CD8-positive, alpha-beta memory T cell (primary cell): ENCODE measurements at regions of chr18 and their contacts with region 1.

Region 1: DNA sequence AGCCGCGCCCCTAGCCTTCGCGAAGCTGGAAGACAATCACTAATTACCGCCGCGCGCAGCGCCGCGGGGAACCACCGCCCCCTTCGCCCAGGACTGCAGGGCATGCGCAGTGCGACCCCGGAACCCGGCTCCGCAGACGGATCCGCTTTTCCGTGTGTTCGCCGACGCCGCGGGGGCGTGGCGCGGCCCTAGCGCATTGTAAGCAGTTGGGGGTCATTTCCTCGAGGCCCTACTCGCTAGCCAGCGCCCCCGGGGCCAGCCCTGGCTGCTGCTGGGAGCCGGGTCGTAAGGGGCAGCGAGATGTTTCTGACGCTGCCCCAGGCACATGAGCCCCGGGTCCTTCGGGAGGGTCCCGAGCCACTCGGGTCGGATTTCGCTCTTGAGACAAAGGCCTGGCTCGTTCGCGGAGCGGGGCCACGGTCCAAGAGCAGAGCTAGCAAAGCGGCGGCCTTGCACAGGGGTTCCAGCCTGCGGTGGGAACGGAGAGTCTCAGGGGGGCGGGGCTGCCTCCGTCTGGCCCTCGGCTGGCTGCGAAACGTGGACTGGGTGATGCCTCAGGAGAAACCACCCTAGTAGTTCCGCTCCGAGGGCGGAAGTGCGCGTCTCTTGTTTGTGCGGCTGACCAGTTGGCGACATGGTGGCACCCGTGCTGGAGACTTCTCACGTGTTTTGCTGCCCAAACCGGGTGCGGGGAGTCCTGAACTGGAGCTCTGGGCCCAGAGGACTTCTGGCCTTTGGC is at the starts of genes ELP2 and SLC39A6:
- DNase-seq: peak; percentile 93 to 96 (median 94)
- H3K4me3 ChIP-seq: peak within 1 kb of the TSS; percentile 99
- H3K4me3 Mint-ChIP-seq: peak within 1 kb of the TSS; percentile 95 to 100 (median 97)
- H3K27ac ChIP-seq: peak within 1 kb of the TSS; percentile 99
- H3K27ac Mint-ChIP-seq: peak within 1 kb of the TSS; percentile 95 to 100 (median 98)
- H3K4me1 ChIP-seq: peaks cover 48% of the 10 kb centered on the region
- H3K4me1 Mint-ChIP-seq: peaks cover 53 to 81% (median 81%) of the 10 kb centered on the region in 3 donors
- H3K27me3 ChIP-seq: no peaks in the 10 kb centered on the region
- H3K27me3 Mint-ChIP-seq: no peaks in the 10 kb centered on the region
- total RNA-seq, gene ELP2: 85.8 to 89.6 TPM
- total RNA-seq, gene SLC39A6: 43.8 to 44.8 TPM

Region 2: GRCh38 chr18:35972197-35973052 is 157.0 kb before region 1 on chr18 and contains the start of gene RMP24:
- CTCF ChIA-PET with region 1: interaction called, 3 read pairs
- POLR2A ChIA-PET with region 1: interaction called, 13 read pairs
- DNase-seq: peak; percentile 89 to 96 (median 91)
- H3K4me3 ChIP-seq: peak within 1 kb of the TSS; percentile 78
- H3K4me3 Mint-ChIP-seq: peak within 1 kb of the TSS; percentile 93 to 98 (median 96)
- H3K27ac ChIP-seq: peak within 1 kb of the TSS; percentile 82
- H3K27ac Mint-ChIP-seq: peak within 1 kb of the TSS; percentile 92 to 99 (median 98)
- H3K4me1 ChIP-seq: peaks cover 44% of the 10 kb centered on the region
- H3K4me1 Mint-ChIP-seq: peaks cover 50 to 69% (median 68%) of the 10 kb centered on the region in 3 donors
- H3K27me3 ChIP-seq: no peaks in the 10 kb centered on the region
- H3K27me3 Mint-ChIP-seq: peaks cover 0 to 1% of the 10 kb centered on the region in 2 donors